OCI-LY7 (cell line): ENCODE measurements at regions of chr15 and their contacts with region 1.

Region 1: DNA sequence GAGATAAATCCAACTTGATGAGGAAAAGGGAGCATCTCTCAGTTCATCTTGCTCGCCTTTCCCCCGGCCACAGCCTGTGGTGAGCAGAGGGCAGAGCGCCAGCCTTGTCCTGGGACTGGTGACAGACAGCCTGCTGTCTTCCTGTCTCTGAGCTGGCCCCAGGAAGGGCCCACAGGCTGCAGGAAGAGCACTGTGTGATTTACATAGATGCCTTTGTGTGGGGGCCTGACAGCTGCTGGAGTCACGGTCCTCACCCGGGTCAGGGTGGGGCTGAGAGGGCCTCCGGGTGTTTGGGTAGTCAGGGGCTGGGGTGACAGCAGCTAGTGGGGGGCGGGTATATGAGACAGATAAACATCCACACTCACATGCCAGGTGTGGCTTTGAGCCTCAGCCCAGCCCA is 29.3 kb downstream of the PLA2G4D start:
- DNase-seq: peak; percentile 83
- H3K4me3 ChIP-seq: no peak overlapping the region
- H3K27ac ChIP-seq: peak overlapping the region; percentile 1
- H3K4me1 ChIP-seq: peaks cover 15% of the 10 kb centered on the region
- CTCF ChIP-seq: no peak

Region 2: GRCh38 chr15:42084460-42085235 is 19.6 kb after region 1 on chr15:
- CTCF ChIA-PET with region 1: no interaction called
- POLR2A ChIA-PET with region 1: interaction called, 5 read pairs
- intact Hi-C with region 1: loop called (anchors 1 kb)
- DNase-seq: peak; percentile 54
- H3K4me3 ChIP-seq: no peak overlapping the region
- H3K27ac ChIP-seq: no peak overlapping the region
- H3K4me1 ChIP-seq: no peaks in the 10 kb centered on the region
- CTCF ChIP-seq: peak; percentile 89

Region 3: GRCh38 chr15:42137431-42138261 is 72.6 kb after region 1 on chr15:
- CTCF ChIA-PET with region 1: no interaction called
- POLR2A ChIA-PET with region 1: no interaction called
- intact Hi-C with region 1: loop called (anchors 1 kb)
- DNase-seq: peak; percentile 66
- H3K4me3 ChIP-seq: no peak overlapping the region
- H3K27ac ChIP-seq: no peak overlapping the region
- H3K4me1 ChIP-seq: no peaks in the 10 kb centered on the region
- CTCF ChIP-seq: peak; percentile 92

Region 4: GRCh38 chr15:42385206-42385979 is 320.4 kb after region 1 on chr15:
- CTCF ChIA-PET with region 1: no interaction called
- POLR2A ChIA-PET with region 1: no interaction called
- intact Hi-C with region 1: loop called (anchors 2 kb)
- DNase-seq: peak; percentile 73
- H3K4me3 ChIP-seq: no peak overlapping the region
- H3K27ac ChIP-seq: no peak overlapping the region
- H3K4me1 ChIP-seq: peaks cover 7% of the 10 kb centered on the region
- CTCF ChIP-seq: peak; percentile 95

Region 5: GRCh38 chr15:42474827-42475226 is 409.8 kb after region 1 on chr15:
- CTCF ChIA-PET with region 1: no interaction called
- POLR2A ChIA-PET with region 1: no interaction called
- intact Hi-C with region 1: loop called (anchors 5 kb)
- DNase-seq: no peak
- H3K4me3 ChIP-seq: no peak overlapping the region
- H3K27ac ChIP-seq: no peak overlapping the region
- H3K4me1 ChIP-seq: peaks cover 13% of the 10 kb centered on the region
- CTCF ChIP-seq: no peak